ENCODE measurements at regions of chr7 and their contacts with region 1.

Region 1: GRCh38 chr7:116236020-116236630 is 25.8 kb downstream of the TES start:
- DNase-seq: no peak
- H3K4me3 ChIP-seq: no peak overlapping the region
- H3K27me3 ChIP-seq: no peaks in the 10 kb centered on the region
- CTCF ChIP-seq: peak; percentile 51

Region 2: DNA sequence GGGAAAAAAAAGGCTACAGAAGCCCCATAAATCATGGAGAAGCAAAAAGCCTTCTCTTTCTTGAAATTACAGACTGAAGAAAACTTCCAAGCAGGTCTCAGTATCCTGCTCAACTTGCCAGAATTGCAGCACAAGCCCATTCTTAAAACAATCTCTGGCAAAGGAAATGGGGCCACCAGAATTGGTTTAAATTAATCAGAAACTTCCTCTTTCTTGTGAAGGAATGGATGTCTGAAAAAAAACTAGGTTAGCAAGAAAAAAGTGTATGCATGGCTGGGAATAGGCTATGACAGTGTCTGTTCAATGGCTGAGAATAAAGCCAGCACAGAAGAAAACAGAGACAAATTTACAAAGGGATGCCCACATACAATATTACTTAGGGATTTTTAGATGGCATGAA is 264.6 kb before region 1 on chr7:
- CTCF ChIA-PET with region 1: no interaction called
- POLR2A ChIA-PET with region 1: no interaction called
- DNase-seq: no peak
- H3K4me3 ChIP-seq: no peak overlapping the region
- H3K27me3 ChIP-seq: no peaks in the 10 kb centered on the region
- CTCF ChIP-seq: no peak

Region 3: GRCh38 chr7:115984120-115984519 is 252.0 kb before region 1 on chr7:
- CTCF ChIA-PET with region 1: no interaction called
- POLR2A ChIA-PET with region 1: no interaction called
- DNase-seq: no peak
- H3K4me3 ChIP-seq: no peak overlapping the region
- H3K27me3 ChIP-seq: no peaks in the 10 kb centered on the region
- CTCF ChIP-seq: no peak

Region 4: DNA sequence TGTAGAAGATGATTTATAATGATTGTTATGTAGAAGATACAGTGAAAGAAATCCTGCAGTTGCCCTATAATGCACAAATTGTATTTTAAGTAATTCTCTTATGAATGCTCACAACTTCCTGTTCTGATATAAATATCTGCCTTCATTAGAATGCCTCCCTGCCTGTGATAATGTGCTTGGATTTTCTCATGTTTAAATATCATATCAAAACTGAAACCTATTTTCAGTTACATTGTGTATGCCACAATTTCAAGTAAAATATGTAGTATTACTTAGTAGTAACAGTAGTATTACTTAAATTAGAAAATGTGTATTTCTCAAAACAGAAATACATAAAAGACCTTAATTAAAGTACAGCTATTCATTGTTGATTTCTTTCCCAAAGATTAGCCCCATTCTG is 164.5 kb before region 1 on chr7:
- CTCF ChIA-PET with region 1: no interaction called
- POLR2A ChIA-PET with region 1: no interaction called
- DNase-seq: no peak
- H3K4me3 ChIP-seq: no peak overlapping the region
- H3K27me3 ChIP-seq: no peaks in the 10 kb centered on the region
- CTCF ChIP-seq: no peak

Region 5: DNA sequence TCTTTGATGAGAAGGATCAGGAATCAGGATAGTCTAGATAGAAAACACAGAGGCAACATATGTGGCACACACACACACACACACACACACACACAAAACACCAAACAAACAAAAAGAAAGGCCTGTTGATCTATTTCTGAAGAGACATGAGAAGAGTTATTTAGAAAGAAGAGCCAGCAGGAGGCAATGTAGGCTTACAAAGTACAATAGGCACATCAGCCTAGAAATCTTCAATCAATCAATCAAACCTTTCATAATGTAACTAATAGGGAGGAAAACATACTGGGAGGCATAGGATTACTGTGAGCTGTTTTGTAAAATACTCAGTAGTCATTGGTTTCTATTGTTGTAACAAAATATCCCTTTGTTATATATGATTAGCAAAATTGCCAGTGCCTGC is 73.1 kb before region 1 on chr7:
- CTCF ChIA-PET with region 1: interaction called, 12 read pairs
- POLR2A ChIA-PET with region 1: no interaction called
- DNase-seq: no peak
- H3K4me3 ChIP-seq: no peak overlapping the region
- H3K27me3 ChIP-seq: 0 out of 2 replicates have a peak, but pooled peaks cover 1% of the 10 kb centered on the region
- CTCF ChIP-seq: peak; percentile 19; the same call in 1 of the 2 replicates

Region 6: GRCh38 chr7:116180302-116180701 is 55.8 kb before region 1 on chr7:
- CTCF ChIA-PET with region 1: interaction called, 192 read pairs
- POLR2A ChIA-PET with region 1: no interaction called
- DNase-seq: no peak
- H3K4me3 ChIP-seq: no peak overlapping the region
- H3K27me3 ChIP-seq: no peaks in the 10 kb centered on the region
- CTCF ChIP-seq: peak; percentile 78

Region 7: GRCh38 chr7:116218051-116218645 is 18.0 kb before region 1 on chr7:
- CTCF ChIA-PET with region 1: interaction called, 11 read pairs
- POLR2A ChIA-PET with region 1: no interaction called
- DNase-seq: peak; percentile 71
- H3K4me3 ChIP-seq: no peak overlapping the region
- H3K27me3 ChIP-seq: peaks cover 2% of the 10 kb centered on the region; the same call in 1 of the 2 replicates
- CTCF ChIP-seq: no peak

Region 8: DNA sequence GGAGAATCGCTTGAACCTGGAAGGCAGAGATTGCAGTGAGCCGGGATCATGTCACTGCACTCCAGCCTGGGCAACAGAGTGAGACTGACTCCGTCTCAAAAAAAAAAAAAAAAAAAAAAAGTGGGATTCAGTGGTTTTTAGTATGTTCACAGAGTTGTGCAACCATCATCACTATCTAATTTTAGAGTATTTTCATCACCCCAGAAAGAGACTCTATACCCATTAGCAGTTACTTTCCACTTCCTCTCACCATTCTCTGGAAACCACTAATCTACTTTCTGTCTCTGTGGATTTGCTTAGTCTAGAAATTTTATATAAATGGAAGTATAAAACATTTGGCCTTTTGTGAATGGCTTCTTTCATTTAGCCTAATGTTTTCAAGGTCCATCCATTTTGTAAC is 830.5 kb after region 1 on chr7:
- CTCF ChIA-PET with region 1: no interaction called
- POLR2A ChIA-PET with region 1: no interaction called
- DNase-seq: no peak
- H3K4me3 ChIP-seq: no peak overlapping the region
- H3K27me3 ChIP-seq: no peaks in the 10 kb centered on the region
- CTCF ChIP-seq: no peak